Panc1 (cell line): ENCODE measurements at regions of chr15 and their contacts with region 1.

Region 1: DNA sequence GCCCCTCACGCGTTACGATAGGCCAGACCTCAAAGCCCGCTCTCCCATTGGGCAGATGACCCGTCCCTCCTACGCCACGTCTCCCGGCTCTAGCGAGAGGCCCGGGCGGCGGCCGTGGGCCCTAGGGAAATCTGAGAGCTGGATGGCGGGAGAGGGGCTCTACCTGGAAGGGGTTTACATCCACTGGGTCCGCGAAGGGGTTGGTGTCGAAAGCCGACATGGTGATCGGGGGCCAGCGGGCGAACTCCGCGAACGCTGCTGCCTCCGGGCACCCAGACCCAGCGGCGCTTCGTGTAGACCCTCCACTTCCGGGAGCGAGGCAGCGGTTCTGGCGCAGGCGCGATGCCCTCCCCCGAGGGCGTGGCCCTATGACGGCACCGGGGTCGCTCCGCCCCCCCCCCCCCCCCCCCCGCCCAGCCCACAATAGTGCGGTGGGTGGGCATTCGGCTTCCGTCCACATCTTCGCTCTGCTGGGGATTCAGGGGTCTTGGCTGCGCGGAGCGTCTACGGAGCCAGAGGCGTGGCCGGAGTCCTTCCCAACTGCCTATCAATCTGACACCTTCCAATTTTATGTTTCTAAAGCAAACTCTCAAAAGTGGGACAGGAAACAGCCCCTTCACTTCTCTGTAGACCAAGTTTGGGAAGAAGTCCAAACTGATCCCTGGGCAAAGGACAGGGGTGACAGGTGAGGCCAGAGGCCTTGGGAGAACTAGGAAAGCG is at the start of gene SCAMP2:
- DNase-seq: peak; percentile 81
- ATAC-seq: peak; percentile 99
- H3K4me3 ChIP-seq: peak within 1 kb of the TSS; percentile 85 to 98
- H3K27ac ChIP-seq: peak within 1 kb of the TSS; percentile 88
- H3K4me1 ChIP-seq: peaks cover 14% of the 10 kb centered on the region
- H3K27me3 ChIP-seq: no peaks in the 10 kb centered on the region
- CTCF ChIP-seq: no peak
- total RNA-seq, gene SCAMP2: 121 TPM

Region 2: DNA sequence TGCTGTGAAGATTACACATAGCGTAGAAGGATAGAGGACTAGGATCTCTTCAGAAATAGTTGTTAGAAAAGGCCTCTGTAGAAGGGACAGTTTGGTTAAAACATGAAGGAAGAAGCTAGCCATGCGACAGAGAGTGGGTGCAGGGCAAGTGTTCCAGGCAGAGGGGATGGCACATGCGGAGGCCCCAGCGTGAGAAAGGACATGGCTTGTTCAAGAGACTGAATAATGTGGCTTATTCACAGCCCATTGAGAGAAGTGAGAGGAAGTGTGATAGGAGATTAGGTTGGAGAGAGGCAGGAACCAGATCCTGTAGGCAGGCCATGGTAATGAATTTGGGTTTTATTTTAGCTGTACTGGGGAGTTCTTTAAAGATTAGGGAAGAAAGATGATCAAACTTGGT is 1764.5 kb before region 1 on chr15:
- CTCF ChIA-PET with region 1: no interaction called
- POLR2A ChIA-PET with region 1: no interaction called
- in situ Hi-C with region 1: no loop called
- intact Hi-C with region 1: no loop called
- DNase-seq: no peak
- ATAC-seq: no peak
- H3K4me3 ChIP-seq: no peak overlapping the region
- H3K27ac ChIP-seq: no peak overlapping the region
- H3K4me1 ChIP-seq: no peaks in the 10 kb centered on the region
- H3K27me3 ChIP-seq: peaks cover 6% of the 10 kb centered on the region; the same call in 1 of the 2 replicates
- CTCF ChIP-seq: no peak

Region 3: DNA sequence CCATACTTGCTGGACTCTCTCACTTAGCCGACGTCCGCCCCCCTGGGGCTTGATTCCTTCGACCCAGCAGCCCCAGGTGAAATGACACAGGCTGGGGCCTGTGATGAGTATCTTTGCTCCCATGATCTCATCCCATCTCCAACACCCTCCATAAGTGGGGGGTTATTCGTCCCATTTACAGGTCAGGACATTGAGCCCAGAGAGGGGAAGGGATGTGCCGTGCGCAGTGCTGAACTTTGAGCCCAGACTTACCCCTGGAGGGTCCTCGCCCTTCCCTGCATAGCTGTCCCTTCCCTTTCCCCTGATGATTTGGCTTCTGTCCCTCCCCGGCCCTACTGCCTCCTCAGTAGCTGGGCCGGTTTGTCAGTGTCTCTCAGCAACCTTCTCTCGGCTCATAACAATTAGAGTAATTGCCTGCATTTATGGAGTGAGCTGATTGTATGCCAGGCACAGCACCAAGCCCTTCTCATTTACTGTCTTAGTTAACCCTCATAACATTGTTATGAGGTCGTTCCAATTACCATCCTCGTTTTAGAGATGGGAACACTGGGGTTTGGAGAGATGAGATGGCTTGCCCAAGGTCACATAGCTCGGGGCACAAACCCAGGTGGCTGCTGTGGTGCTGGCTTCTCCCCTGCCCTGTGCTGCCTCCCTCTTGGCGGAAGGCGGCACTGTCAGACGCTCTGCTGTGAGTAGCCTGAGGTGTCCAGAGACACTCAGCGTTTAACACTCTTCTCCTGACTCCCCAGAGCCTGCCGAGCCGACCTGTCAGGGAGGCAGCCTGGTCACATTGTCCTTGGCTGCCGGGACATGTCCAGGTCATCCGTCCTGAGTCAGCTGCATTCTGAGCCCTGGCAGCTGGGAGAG is 56.2 kb before region 1 on chr15:
- CTCF ChIA-PET with region 1: no interaction called
- POLR2A ChIA-PET with region 1: interaction called, 10 read pairs
- in situ Hi-C with region 1: no loop called
- intact Hi-C with region 1: no loop called
- DNase-seq: no peak
- ATAC-seq: peak; percentile 74
- H3K4me3 ChIP-seq: no peak overlapping the region
- H3K27ac ChIP-seq: no peak overlapping the region
- H3K4me1 ChIP-seq: peaks cover 4% of the 10 kb centered on the region; the same call in 1 of the 2 replicates
- H3K27me3 ChIP-seq: no peaks in the 10 kb centered on the region
- CTCF ChIP-seq: no peak; the same call in 1 of the 2 replicates

Region 4: GRCh38 chr15:75446151-75446550 is 573.0 kb after region 1 on chr15:
- CTCF ChIA-PET with region 1: no interaction called
- POLR2A ChIA-PET with region 1: interaction called, 10 read pairs
- in situ Hi-C with region 1: no loop called
- intact Hi-C with region 1: no loop called
- DNase-seq: no peak
- ATAC-seq: no peak
- H3K4me3 ChIP-seq: no peak overlapping the region
- H3K27ac ChIP-seq: no peak overlapping the region
- H3K4me1 ChIP-seq: peaks cover 19% of the 10 kb centered on the region
- H3K27me3 ChIP-seq: no peaks in the 10 kb centered on the region
- CTCF ChIP-seq: no peak